ENCODE measurements at regions of chr3 and their contacts with region 1.

Region 1: GRCh38 chr3:64685800-64686445 is 1.9 kb downstream of the ADAMTS9 start:
- DNase-seq: peak; percentile 96
- H3K4me3 ChIP-seq: peak overlapping the region; percentile 48 to 60
- H3K27ac ChIP-seq: peak overlapping the region; percentile 93 to 94
- H3K4me1 ChIP-seq: no peaks in the 10 kb centered on the region
- H3K27me3 ChIP-seq: no peaks in the 10 kb centered on the region
- CTCF ChIP-seq: peak; percentile 18 to 73 (median 62)
- POLR2A ChIP-seq: peak; percentile 80

Region 2: DNA sequence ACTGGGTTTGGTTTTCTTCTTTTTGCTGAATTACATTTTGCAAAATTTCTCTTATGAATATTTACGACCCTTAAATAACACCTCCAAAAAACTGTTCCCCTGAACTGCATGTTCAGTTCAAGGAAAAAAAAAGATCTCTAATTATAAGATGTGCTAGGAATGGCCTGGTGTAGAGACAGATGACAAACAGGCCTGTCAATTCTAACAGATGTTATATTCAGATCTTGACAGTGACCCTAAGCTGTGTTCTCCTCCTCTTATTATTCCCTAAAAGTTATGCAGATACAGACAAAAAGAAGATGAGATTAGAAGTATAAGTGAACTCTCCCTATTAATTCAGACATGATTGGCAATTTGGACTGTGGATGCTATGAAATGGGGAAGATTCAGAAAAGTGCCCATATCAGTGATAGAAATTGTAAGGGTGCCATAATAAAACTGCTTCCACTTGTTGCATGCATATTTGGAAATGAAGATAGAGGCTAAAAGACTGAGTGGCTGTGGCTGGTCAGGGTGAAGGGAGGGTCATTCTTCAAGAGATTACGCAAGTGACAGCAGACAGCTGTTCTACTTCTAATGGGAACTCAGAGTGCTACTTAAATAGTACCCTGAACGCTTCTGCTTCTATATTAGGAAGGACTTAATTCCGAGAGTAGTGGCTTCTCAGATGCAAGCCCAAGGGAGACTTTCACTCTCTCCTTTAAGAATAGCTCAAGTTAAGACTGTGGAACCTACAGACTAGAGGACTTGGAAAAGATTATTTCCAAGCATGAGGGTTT is 73.7 kb before region 1 on chr3:
- intact Hi-C with region 1: loop called (anchors 5 kb)
- DNase-seq: no peak
- H3K4me3 ChIP-seq: no peak overlapping the region
- H3K27ac ChIP-seq: peak overlapping the region; percentile 32 to 67
- H3K4me1 ChIP-seq: no peaks in the 10 kb centered on the region
- H3K27me3 ChIP-seq: no peaks in the 10 kb centered on the region
- CTCF ChIP-seq: no peak
- POLR2A ChIP-seq: no peak

Region 3: GRCh38 chr3:65170390-65171042 is 484.6 kb after region 1 on chr3:
- intact Hi-C with region 1: loop called (anchors 10 kb)
- DNase-seq: peak; percentile 24
- H3K4me3 ChIP-seq: no peak overlapping the region
- H3K27ac ChIP-seq: no peak overlapping the region
- H3K4me1 ChIP-seq: no peaks in the 10 kb centered on the region
- H3K27me3 ChIP-seq: no peaks in the 10 kb centered on the region
- CTCF ChIP-seq: peak in 3 of 4 experiments; percentile 11 to 29 (median 27)
- POLR2A ChIP-seq: no peak

Region 4: DNA sequence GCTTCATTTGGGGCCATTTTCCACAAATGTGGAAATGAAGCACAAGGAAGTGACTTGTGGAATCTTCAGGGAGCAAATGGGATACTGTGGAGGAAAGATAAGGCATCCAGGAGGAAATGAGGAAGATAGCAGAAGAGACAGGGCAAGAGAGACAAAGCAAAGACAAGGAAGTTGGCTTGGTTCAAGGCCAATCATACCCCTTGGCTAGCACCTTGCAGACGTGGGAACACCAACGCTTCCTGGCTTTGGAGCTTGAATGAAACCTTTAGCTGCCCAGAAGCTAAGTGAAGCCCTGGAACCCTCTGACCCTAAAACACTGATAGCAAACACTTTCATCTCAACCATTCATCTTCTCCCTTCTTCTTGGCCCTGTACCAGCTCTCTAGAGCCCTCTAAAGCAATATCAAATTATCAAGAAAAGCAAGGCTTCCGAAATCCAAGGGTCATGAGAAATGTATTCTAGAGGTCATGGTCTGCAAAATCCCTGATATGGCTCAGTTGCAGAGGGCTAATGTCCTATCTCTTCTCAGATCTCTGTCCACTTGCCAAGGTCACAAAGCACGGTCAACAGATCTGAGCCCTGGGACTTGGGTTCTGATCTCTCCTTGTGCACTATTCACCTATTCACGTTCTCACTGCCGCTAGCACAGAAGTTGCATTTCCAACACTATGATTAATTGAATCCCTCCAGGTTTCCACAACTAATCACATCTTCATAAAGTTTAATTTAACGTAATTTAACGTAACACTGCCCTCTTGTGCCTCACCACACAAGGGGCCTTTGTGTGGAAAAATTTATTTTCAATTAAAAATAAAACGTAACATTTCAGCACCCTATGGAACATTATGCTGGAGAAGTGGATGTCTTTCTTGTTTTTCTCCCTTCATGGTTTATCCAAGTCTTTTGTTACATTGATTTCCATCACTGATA is 559.5 kb after region 1 on chr3:
- intact Hi-C with region 1: loop called (anchors 5 kb)
- DNase-seq: no peak
- H3K4me3 ChIP-seq: no peak overlapping the region
- H3K27ac ChIP-seq: no peak overlapping the region
- H3K4me1 ChIP-seq: no peaks in the 10 kb centered on the region
- H3K27me3 ChIP-seq: no peaks in the 10 kb centered on the region
- CTCF ChIP-seq: peak in 3 of 4 experiments; percentile 35 to 57 (median 51)
- POLR2A ChIP-seq: no peak

Region 5: DNA sequence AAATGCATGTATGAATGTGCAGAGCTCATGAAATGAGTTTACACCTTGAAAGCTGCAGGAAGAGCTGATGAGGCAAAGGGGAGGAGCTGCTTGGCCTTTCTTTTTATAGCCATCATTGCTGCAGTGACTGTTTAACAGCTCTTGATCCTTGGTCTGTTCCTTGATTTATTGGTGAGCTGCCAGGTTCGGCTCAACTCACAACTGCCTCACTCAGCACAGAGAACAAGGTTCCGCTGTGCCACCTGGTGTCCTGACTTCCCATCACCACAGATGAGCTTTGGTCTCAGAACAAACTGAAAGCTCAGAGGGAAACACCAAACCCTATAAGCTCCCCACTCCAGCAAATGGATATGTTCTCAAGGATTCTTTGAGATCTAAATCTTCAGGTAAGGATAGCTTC is 726.7 kb after region 1 on chr3:
- intact Hi-C with region 1: loop called (anchors 10 kb)
- DNase-seq: peak; percentile 88
- H3K4me3 ChIP-seq: no peak overlapping the region
- H3K27ac ChIP-seq: peak overlapping the region in 1 of 2 donors; percentile 26
- H3K4me1 ChIP-seq: peaks cover 15% of the 10 kb centered on the region
- H3K27me3 ChIP-seq: no peaks in the 10 kb centered on the region
- CTCF ChIP-seq: peak in 3 of 4 experiments; percentile 46 to 62 (median 57)
- POLR2A ChIP-seq: no peak